H1 (cell line): ENCODE measurements at regions of chr19 and their contacts with region 1.

Region 1: DNA sequence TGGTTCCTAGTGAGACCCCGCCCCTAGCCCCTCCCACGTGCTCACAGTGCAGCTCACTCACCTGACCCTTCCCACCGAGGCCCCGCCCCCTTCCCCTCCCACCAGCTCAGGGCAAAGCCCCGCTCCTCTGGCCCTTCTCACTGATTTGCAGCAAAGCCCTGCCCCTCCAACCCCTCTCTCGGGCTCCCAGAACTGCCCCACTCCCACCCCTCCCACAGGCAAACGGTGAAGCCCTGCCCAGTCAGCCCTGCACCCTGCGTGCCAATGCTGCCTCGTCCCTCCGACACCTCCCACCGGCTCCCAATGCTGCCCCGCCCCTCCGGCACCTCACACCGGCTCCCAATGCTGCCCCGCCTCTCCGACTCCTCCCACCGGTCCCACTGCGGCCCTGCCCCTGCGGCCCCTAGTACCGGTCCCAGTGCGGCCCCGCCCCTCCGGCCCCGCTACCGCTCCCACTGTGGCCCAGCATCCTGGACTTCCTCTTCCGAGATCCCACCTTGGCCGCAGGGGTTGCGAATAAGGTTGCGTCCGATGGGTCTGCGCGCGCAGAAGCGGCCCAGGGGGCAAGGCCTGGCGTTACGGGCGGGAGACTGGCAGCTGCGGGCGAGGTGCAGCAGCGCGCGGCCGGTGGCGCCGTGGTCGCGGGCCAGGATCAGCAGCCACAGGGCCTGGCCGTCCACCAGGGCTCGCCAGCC is 834 bp downstream of the FBXO27 start:
- DNase-seq: peak; percentile 97 to 99
- H3K4me3 ChIP-seq: peak overlapping the region; percentile 68 to 91 (median 80)
- H3K27ac ChIP-seq: no peak overlapping the region
- H3K4me1 ChIP-seq: peaks cover 0 to 6% (median 4%) of the 10 kb centered on the region in 4 experiments; a peak in 5 of 7 replicates
- H3K27me3 ChIP-seq: no peaks in the 10 kb centered on the region
- CTCF ChIP-seq: no peak
- EP300 ChIP-seq: no peak
- POLR2A ChIP-seq: peak in 1 of 2 experiments; percentile 3; a peak in 2 of 3 replicates
- RAD21 ChIP-seq: no peak

Region 2: DNA sequence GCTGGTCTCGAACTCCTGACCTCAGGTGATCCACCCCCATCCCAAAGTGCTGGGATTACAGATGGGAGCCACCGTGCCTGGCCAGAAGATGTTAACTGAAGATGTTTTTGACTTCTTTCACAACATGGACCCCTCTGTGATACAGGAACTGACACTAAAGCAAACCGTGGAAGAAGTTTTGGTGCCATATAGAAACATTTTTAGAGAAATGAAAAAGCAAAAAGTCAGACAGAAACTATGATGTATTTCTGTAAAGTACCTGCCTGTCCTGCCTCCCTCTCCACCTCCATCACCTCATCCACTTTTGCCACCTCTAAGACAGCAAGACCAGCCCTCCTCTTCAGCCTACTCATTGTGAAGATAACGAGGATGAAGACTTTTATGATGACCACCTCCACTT is 10.5 kb before region 1 on chr19:
- CTCF ChIA-PET with region 1: no interaction called
- POLR2A ChIA-PET with region 1: interaction called, 14 read pairs
- DNase-seq: no peak
- H3K4me3 ChIP-seq: no peak overlapping the region
- H3K27ac ChIP-seq: no peak overlapping the region
- H3K4me1 ChIP-seq: no peaks in the 10 kb centered on the region
- H3K27me3 ChIP-seq: no peaks in the 10 kb centered on the region
- CTCF ChIP-seq: no peak
- EP300 ChIP-seq: no peak
- POLR2A ChIP-seq: no peak
- RAD21 ChIP-seq: no peak

Region 3: GRCh38 chr19:39070888-39071287 is 39.4 kb after region 1 on chr19:
- CTCF ChIA-PET with region 1: no interaction called
- POLR2A ChIA-PET with region 1: no interaction called
- DNase-seq: no peak
- H3K4me3 ChIP-seq: no peak overlapping the region
- H3K27ac ChIP-seq: no peak overlapping the region
- H3K4me1 ChIP-seq: no peaks in the 10 kb centered on the region
- H3K27me3 ChIP-seq: no peaks in the 10 kb centered on the region
- CTCF ChIP-seq: no peak
- EP300 ChIP-seq: no peak
- POLR2A ChIP-seq: no peak
- RAD21 ChIP-seq: no peak

Region 4: DNA sequence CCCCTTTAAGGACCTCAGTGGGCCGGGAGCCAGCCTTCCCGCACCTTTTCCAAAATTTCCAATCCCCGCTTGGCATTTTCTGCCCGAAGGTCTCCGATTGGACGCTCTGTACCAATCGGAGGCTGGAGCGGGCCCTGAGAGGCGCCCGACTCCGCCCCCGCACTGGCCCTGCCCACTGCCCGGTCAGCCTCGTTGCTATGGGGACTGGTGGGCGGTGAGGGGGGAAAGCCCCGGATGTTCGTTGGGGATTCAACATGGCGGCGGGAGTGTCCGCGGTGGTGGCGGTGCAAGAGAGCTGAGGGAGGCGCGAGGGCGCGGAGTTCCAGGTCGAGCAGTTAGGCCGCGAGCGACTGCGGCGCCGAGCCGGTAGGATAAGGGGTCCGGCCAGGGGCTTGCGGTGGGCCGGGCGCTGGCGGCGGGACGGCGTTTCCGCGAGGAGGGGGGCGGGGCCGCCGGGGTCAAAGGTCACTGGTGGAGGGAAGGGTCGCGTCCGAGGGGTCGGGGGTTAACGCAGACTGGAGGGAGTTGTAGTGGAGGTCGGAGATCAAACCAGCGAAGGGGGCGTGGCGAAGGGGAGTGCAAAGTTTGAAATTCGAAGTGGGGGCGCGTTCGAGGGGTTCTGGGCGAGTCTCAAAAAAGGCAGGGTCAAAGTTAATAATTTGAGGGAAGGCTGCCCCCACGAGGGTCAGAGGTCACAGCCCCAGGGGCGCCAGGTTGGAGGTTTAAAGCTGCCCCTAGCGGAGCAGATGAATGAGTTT is 94.2 kb after region 1 on chr19 and contains the start of gene PAK4:
- CTCF ChIA-PET with region 1: no interaction called
- POLR2A ChIA-PET with region 1: no interaction called
- DNase-seq: peak; percentile 84 to 98
- H3K4me3 ChIP-seq: peak within 1 kb of the TSS; percentile 73 to 94 (median 78)
- H3K27ac ChIP-seq: peak within 1 kb of the TSS; percentile 62; the same call in 1 of the 2 replicates
- H3K4me1 ChIP-seq: peaks cover 0 to 14% (median 6%) of the 10 kb centered on the region in 4 experiments; a peak in 6 of 7 replicates
- H3K27me3 ChIP-seq: no peaks in the 10 kb centered on the region
- CTCF ChIP-seq: no peak
- EP300 ChIP-seq: no peak
- POLR2A ChIP-seq: peak in 1 of 2 experiments; percentile 67; a peak in 1 of 3 replicates
- RAD21 ChIP-seq: no peak
- total RNA-seq, gene PAK4: 64.4 and 67.6 TPM in 2 replicates